MCF 10A (cell line): ENCODE measurements at regions of chr2 and their contacts with region 1.

Region 1: GRCh38 chr2:173427887-173428600 is 73.4 kb downstream of the CDCA7 start:
- DNase-seq: peak; percentile 95
- H3K4me3 Mint-ChIP-seq: peak overlapping the region; percentile 21
- H3K27ac Mint-ChIP-seq: peak overlapping the region; percentile 59
- H3K4me1 Mint-ChIP-seq: peaks cover 30% of the 10 kb centered on the region
- H3K27me3 Mint-ChIP-seq: peaks cover 30% of the 10 kb centered on the region
- CTCF ChIP-seq: no peak

Region 2: GRCh38 chr2:173239644-173240043 is 188.4 kb before region 1 on chr2:
- CTCF ChIA-PET with region 1: no interaction called
- POLR2A ChIA-PET with region 1: no interaction called
- intact Hi-C with region 1: no loop called
- DNase-seq: no peak
- H3K4me3 Mint-ChIP-seq: no peak overlapping the region
- H3K27ac Mint-ChIP-seq: no peak overlapping the region
- H3K4me1 Mint-ChIP-seq: no peaks in the 10 kb centered on the region
- H3K27me3 Mint-ChIP-seq: no peaks in the 10 kb centered on the region
- CTCF ChIP-seq: no peak

Region 3: GRCh38 chr2:173414823-173415322 is 13.2 kb before region 1 on chr2:
- CTCF ChIA-PET with region 1: interaction called, 4 read pairs
- POLR2A ChIA-PET with region 1: interaction called, 18 read pairs
- intact Hi-C with region 1: no loop called
- DNase-seq: peak; percentile 97
- H3K4me3 Mint-ChIP-seq: no peak overlapping the region
- H3K27ac Mint-ChIP-seq: no peak overlapping the region
- H3K4me1 Mint-ChIP-seq: peaks cover 11% of the 10 kb centered on the region
- H3K27me3 Mint-ChIP-seq: peaks cover under 1% of the 10 kb centered on the region
- CTCF ChIP-seq: no peak